ENCODE measurements at regions of chr17 and their contacts with region 1.

Region 1: GRCh38 chr17:61361084-61361483 is 38.6 kb upstream of the TBX2 start:
- DNase-seq: peak; percentile 57
- H3K4me3 ChIP-seq: no peak overlapping the region
- H3K27ac ChIP-seq: no peak overlapping the region
- H3K4me1 ChIP-seq: peaks cover 23% of the 10 kb centered on the region
- H3K27me3 ChIP-seq: no peaks in the 10 kb centered on the region
- CTCF ChIP-seq: no peak

Region 2: DNA sequence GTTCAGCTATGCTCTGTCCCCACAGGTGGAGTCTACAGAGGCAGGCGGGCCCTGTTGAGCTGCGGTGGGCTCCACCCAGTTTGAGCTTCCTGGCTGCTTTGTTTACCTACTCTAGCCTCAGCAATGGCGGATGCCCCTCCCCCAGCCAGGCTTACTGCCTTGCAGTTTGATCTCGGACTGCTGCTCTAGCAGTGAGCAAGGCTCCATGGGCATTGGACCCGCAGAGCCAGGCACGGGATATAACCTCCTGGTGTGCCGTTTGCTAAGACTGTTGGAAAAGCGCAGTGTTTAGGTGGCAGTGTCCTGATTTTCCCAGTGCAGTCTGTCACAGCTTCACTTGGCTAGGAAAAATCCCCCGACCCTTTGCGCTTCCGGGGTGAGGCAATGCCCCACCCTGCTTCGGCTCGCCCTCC is 594.3 kb before region 1 on chr17:
- CTCF ChIA-PET with region 1: interaction called, 16 read pairs
- dilution Hi-C with region 1: no loop called
- in situ Hi-C with region 1: no loop called
- intact Hi-C with region 1: no loop called
- DNase-seq: no peak
- H3K4me3 ChIP-seq: no peak overlapping the region
- H3K27ac ChIP-seq: no peak overlapping the region
- H3K4me1 ChIP-seq: no peaks in the 10 kb centered on the region
- H3K27me3 ChIP-seq: no peaks in the 10 kb centered on the region
- CTCF ChIP-seq: no peak

Region 3: DNA sequence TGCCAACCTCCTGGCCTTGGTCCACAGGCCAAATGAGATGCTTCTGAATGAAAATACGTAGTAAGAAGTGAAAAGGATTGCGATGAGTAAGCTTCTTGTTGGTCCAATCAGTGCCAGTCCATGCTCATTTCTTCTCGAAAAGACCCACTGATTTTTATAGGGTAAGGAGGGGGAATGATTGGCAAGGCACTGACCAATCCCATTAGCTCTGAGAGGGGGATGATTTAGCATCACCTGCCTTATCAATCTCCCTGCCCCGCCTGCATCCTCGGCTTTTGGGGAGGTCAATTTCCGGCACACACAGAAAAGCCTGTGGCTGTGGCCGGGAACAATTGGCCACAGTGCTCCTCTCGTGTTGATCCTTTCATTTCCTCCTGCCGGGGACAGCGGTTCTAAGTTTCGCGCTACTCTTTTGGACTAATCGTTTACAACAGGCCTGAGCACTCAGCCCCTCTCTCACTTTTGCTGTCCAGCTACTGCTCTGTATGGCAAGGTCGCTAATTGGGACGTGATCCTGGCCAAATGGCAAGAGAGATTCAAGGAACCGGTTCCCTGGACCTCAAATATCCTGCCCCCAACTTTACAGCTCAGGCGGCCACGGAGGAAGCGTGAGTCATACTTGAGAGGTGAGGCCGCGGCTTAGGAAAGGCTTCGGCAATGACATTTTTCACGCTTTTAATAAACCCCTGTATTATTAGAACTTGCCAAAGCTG is 134.2 kb after region 1 on chr17:
- CTCF ChIA-PET with region 1: no interaction called
- dilution Hi-C with region 1: no loop called
- in situ Hi-C with region 1: no loop called
- intact Hi-C with region 1: no loop called
- DNase-seq: peak; percentile 89
- H3K4me3 ChIP-seq: peak overlapping the region; percentile 32 to 46 (median 38)
- H3K27ac ChIP-seq: peak overlapping the region; percentile 70
- H3K4me1 ChIP-seq: peaks cover 19% of the 10 kb centered on the region
- H3K27me3 ChIP-seq: no peaks in the 10 kb centered on the region
- CTCF ChIP-seq: no peak